ENCODE measurements at regions of chr12 and their contacts with region 1.

Region 1: GRCh38 chr12:47085815-47086252 is 6.1 kb upstream of the AMIGO2 start:
- DNase-seq: peak in 5 of 9 donors; percentile 26 to 54 (median 32)
- ATAC-seq: peak; percentile 85
- H3K4me3 ChIP-seq: peak overlapping the region; percentile 3
- H3K4me3 Mint-ChIP-seq: peak overlapping the region in 9 of 10 donors; percentile 8 to 85 (median 30)
- H3K27ac ChIP-seq: no peak overlapping the region
- H3K27ac Mint-ChIP-seq: peak overlapping the region; percentile 8 to 99 (median 81)
- H3K4me1 ChIP-seq: peaks cover 38 to 42% of the 10 kb centered on the region in 2 donors
- H3K4me1 Mint-ChIP-seq: peaks cover 42 to 74% (median 61%) of the 10 kb centered on the region in 7 donors
- H3K27me3 ChIP-seq: no peaks in the 10 kb centered on the region
- H3K27me3 Mint-ChIP-seq: no peaks in the 10 kb centered on the region

Region 2: DNA sequence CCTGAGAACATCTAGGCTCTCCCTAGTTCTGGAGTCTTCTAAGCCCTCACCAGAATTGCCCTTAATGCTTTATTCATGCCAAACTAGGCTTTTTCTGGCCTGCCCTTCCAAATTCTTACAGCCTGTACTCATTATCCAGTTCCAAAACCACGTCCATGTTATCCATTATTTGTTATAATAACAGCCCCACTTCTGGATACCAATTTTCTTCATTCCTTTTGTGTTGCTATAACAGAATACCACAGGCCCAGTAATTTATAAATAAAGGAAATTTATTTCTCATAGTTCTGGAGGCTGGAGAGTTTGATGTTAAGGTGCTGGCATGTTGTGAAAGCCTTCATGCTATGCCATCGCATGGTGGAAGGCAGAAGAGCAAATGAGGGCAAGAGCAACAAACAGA is 61.9 kb after region 1 on chr12:
- CTCF ChIA-PET with region 1: no interaction called
- POLR2A ChIA-PET with region 1: no interaction called
- intact Hi-C with region 1: loop called in 1 of 2 experiments (anchors 2 kb)
- DNase-seq: no peak
- ATAC-seq: no peak
- H3K4me3 ChIP-seq: no peak overlapping the region
- H3K4me3 Mint-ChIP-seq: no peak overlapping the region
- H3K27ac ChIP-seq: no peak overlapping the region
- H3K27ac Mint-ChIP-seq: peak overlapping the region in 2 of 9 donors; percentile 24 to 86
- H3K4me1 ChIP-seq: peaks cover 0 to 11% of the 10 kb centered on the region in 2 donors
- H3K4me1 Mint-ChIP-seq: peaks cover 14 to 50% (median 36%) of the 10 kb centered on the region in 7 donors
- H3K27me3 ChIP-seq: no peaks in the 10 kb centered on the region
- H3K27me3 Mint-ChIP-seq: no peaks in the 10 kb centered on the region